ENCODE measurements at regions of chr10 and their contacts with region 1.

Region 1: DNA sequence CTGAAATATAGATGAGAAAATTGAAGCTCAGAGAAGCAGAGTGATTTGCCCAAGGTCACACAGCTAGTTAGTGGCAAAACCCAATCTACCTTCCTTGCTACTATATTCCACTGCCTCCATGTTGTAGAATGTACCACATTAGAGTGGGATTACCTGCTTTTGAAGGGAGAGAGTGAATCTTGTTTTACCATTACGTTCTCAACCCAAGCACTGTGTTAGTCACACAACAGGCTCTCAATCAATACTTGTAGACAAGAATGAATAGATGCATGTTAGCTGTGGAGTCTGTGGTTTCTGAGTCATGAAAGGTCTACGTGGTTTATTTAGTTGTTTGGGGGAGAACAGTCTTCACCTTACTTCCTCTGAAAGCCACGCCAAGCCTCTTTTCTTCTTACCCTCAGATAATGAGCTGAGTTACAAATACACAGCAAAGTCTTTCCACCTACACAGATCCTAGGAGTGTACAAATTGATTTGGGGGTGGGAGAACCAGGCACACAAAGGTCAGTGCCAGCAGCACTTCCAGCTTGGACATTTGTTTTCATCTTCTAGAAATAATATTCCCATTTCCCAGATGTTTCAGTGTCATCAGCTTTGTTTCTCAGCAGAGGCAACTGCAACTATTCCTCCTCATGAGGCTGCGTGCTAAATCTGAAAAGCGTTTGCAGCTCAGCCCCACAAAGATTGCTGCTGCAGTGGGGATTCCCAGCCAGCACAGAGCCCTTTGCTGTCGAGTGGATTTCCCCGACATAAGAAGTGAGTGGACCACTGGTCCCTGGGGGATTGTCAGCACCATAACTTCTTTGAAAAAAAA is 71.5 kb upstream of the ADO start:
- DNase-seq: peak; percentile 94
- ATAC-seq: peak; percentile 83
- H3K4me3 ChIP-seq: peak overlapping the region; percentile 41; the same call in 1 of the 2 replicates
- H3K27ac ChIP-seq: peak overlapping the region; percentile 93
- H3K4me1 ChIP-seq: peaks cover 50% of the 10 kb centered on the region
- H3K27me3 ChIP-seq: no peaks in the 10 kb centered on the region
- CTCF ChIP-seq: no peak
- EP300 ChIP-seq: peak; percentile 83 to 87; a peak in 3 of 4 replicates
- POLR2A ChIP-seq: no peak; the same call in 1 of the 2 replicates
- RAD21 ChIP-seq: peak; percentile 38; the same call in 1 of the 2 replicates

Region 2: GRCh38 chr10:62618576-62619412 is 114.3 kb before region 1 on chr10:
- CTCF ChIA-PET with region 1: interaction called, 48 read pairs
- POLR2A ChIA-PET with region 1: no interaction called
- RAD21 ChIA-PET with region 1: interaction called, 36 read pairs
- SMC1A ChIA-PET with region 1: interaction called, 70 read pairs
- in situ Hi-C with region 1: no loop called
- intact Hi-C with region 1: loop called (anchors 1 kb)
- DNase-seq: no peak
- ATAC-seq: peak; percentile 58
- H3K4me3 ChIP-seq: no peak overlapping the region
- H3K27ac ChIP-seq: 0 out of 2 replicates have a peak overlapping the region, but pooled peaks have one; percentile 2
- H3K4me1 ChIP-seq: peaks cover 30% of the 10 kb centered on the region
- H3K27me3 ChIP-seq: no peaks in the 10 kb centered on the region
- CTCF ChIP-seq: no peak
- EP300 ChIP-seq: no peak
- POLR2A ChIP-seq: no peak
- RAD21 ChIP-seq: no peak

Region 3: DNA sequence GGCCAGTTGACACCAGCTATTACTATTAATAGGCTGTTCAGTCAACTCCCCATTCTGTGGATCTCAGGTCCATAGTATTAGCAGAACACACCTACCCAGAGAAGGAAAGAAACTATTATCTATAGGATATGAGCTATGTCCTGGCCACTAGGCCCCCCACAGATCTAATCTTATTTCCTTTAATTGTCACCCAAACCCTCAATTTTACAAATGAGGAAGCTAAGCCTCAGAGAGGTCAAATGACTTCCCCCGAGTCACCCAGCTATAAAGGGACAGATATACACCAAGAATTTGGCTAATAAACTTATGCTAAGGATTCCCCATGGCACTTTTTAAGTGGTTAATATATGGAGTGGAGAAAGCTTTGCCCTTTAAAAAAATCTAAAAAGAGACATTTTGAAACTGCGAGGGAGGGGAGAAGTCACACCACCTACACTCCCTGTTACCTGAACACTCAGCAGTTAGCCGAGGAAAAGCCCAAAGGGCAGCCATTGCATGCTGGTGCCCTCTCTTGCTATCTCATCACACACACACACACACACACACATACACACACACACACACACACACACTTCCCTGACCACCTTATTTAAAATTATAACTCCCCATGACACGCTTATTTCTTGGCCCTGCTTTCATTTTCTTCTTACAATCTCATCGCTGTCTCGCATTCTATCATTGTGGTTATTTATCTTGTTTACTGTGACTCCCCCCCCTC is 85.5 kb before region 1 on chr10:
- CTCF ChIA-PET with region 1: interaction called, 8 read pairs
- POLR2A ChIA-PET with region 1: interaction called, 4 read pairs
- RAD21 ChIA-PET with region 1: interaction called, 23 read pairs
- SMC1A ChIA-PET with region 1: interaction called, 14 read pairs
- in situ Hi-C with region 1: no loop called
- intact Hi-C with region 1: no loop called
- DNase-seq: no peak
- ATAC-seq: peak; percentile 59
- H3K4me3 ChIP-seq: no peak overlapping the region
- H3K27ac ChIP-seq: no peak overlapping the region
- H3K4me1 ChIP-seq: peaks cover 29% of the 10 kb centered on the region
- H3K27me3 ChIP-seq: no peaks in the 10 kb centered on the region
- CTCF ChIP-seq: no peak
- EP300 ChIP-seq: peak; percentile 29 to 40; a peak in 1 of 4 replicates
- POLR2A ChIP-seq: no peak
- RAD21 ChIP-seq: no peak

Region 4: GRCh38 chr10:62707810-62708209 is 25.2 kb before region 1 on chr10:
- CTCF ChIA-PET with region 1: interaction called, 16 read pairs
- POLR2A ChIA-PET with region 1: interaction called, 22 read pairs
- RAD21 ChIA-PET with region 1: interaction called, 91 read pairs
- SMC1A ChIA-PET with region 1: interaction called, 104 read pairs
- in situ Hi-C with region 1: no loop called
- intact Hi-C with region 1: loop called (anchors 2 kb)
- DNase-seq: peak; percentile 40
- ATAC-seq: peak; percentile 76
- H3K4me3 ChIP-seq: peak overlapping the region; percentile 9; the same call in 1 of the 2 replicates
- H3K27ac ChIP-seq: peak overlapping the region; percentile 61; the same call in 1 of the 2 replicates
- H3K4me1 ChIP-seq: peaks cover 30% of the 10 kb centered on the region
- H3K27me3 ChIP-seq: no peaks in the 10 kb centered on the region
- CTCF ChIP-seq: no peak
- EP300 ChIP-seq: peak; percentile 9 to 76; a peak in 2 of 4 replicates
- POLR2A ChIP-seq: no peak
- RAD21 ChIP-seq: 0 out of 2 replicates have a peak, but pooled peaks have one; percentile 20

Region 5: GRCh38 chr10:62769574-62770242 is 36.7 kb after region 1 on chr10:
- CTCF ChIA-PET with region 1: interaction called, 8 read pairs
- POLR2A ChIA-PET with region 1: interaction called, 43 read pairs
- RAD21 ChIA-PET with region 1: interaction called, 69 read pairs
- SMC1A ChIA-PET with region 1: interaction called, 124 read pairs
- in situ Hi-C with region 1: no loop called
- intact Hi-C with region 1: loop called (anchors 2 kb)
- DNase-seq: no peak
- ATAC-seq: peak; percentile 87
- H3K4me3 ChIP-seq: no peak overlapping the region
- H3K27ac ChIP-seq: peak overlapping the region; percentile 56
- H3K4me1 ChIP-seq: peaks cover 31% of the 10 kb centered on the region
- H3K27me3 ChIP-seq: no peaks in the 10 kb centered on the region
- CTCF ChIP-seq: no peak
- EP300 ChIP-seq: no peak
- POLR2A ChIP-seq: no peak
- RAD21 ChIP-seq: no peak

Region 6: DNA sequence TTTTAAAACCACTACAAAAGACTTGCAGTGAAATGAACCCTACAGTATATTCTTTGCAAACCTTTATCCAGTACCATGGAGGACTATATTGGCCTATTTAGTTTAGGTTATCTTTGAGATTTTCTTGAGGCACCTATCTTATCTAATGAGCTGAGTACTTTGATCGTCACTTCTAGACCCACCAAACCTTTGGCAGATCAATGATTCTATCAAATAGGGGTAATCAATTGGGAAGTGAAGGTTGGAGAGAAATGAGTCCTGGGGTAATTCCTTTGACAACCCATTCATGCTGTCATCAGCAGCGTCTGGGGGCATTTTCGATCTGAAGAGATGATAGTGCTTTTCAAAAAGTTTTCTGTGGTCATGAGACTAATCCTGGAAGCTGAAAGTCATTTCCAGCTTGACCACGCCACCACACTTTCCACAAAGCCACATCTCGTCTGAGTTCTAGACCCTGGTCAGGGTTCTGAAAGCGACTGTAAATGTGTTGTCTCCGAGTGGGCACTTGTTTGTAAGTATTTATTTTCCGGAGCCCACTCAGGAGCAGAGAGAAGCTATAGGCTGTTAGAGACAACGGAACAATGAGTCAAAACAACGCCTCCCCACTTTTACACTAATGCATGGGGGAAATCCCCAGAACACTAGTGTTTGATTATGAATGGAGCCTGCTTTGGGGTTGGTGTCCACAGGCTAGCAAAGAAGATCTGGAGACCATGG is 78.3 kb after region 1 on chr10:
- CTCF ChIA-PET with region 1: interaction called, 28 read pairs
- POLR2A ChIA-PET with region 1: interaction called, 14 read pairs
- RAD21 ChIA-PET with region 1: interaction called, 141 read pairs
- SMC1A ChIA-PET with region 1: interaction called, 82 read pairs
- in situ Hi-C with region 1: no loop called
- intact Hi-C with region 1: loop called (anchors 1 kb)
- DNase-seq: peak; percentile 85
- ATAC-seq: peak; percentile 62
- H3K4me3 ChIP-seq: peak overlapping the region; percentile 25; the same call in 1 of the 2 replicates
- H3K27ac ChIP-seq: peak overlapping the region; percentile 42; the same call in 1 of the 2 replicates
- H3K4me1 ChIP-seq: peaks cover 20% of the 10 kb centered on the region
- H3K27me3 ChIP-seq: no peaks in the 10 kb centered on the region
- CTCF ChIP-seq: no peak
- EP300 ChIP-seq: peak; percentile 80 to 86; a peak in 3 of 4 replicates
- POLR2A ChIP-seq: 0 out of 2 replicates have a peak, but pooled peaks have one; percentile 21
- RAD21 ChIP-seq: 0 out of 2 replicates have a peak, but pooled peaks have one; percentile 6

Measured in GM12878 (cell line).